Head of caudate nucleus (tissue), 42 donors: ENCODE measurements at regions of chr1 and their contacts with region 1.

Region 1: DNA sequence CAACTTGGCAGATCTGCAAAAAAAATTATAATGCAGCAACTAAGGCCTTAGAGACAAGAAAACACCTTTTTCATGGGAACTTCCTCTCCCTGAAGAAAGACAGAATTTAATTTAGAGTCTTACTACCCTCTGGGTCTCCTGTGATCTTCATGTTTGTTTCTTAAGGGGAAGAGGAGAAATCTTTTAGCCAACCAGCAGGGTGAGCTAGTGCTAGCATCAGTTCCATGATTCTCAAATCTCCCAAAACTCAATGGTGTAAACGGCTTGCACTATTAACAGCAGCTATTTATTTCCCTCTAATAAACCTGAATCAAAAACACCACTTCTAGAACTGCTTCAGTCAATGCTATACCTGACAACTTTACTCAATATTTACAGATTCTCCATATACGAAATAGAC is 3.8 kb downstream of the ZNF644 start:
- DNase-seq: peak in 4 of 42 donors; percentile 5 to 32 (median 16)

Region 2: DNA sequence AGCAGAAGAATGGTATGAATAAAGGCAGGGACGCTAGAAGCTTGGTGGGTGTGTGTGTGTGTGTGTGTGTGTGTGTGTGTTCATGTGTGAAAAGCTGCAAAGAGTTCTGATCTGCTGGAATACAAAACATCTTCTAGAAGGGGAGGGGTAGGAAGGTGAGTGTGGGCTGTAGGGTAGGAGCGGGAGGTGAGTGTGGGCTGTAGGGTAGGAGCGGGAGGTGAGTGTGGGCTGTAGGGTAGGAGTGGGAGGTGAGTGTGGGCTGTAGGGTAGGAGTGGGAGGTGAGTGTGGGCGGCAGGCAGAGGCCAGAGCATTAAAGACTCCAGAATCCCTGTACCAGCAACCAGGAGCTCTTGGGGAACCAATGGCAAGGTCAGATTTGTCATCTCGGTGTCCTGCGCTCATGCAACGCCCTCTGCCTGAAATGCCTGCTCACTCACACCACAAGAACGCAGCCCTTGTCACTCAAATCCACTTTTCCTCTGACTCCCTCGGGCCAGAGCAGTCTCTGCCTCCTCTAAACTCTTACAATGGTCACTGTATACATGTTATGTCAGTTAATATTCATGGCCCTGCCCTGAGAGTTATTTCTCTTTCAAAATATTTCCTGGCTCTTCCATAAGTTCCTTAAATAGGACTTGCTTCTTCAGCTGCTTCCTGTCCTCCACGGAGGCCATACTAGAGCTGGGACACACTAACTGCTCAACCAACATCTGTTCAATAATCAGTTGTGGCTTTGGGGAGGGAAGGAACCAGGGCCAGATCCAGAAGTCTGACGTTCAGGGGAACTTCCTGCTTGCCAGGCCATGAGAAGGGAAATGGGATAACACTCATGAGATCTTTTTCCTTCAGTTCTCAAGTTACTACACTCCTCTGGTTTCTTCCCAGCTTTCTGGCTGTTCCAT is 57.5 kb after region 1 on chr1:
- intact Hi-C with region 1: no loop called
- DNase-seq: no peak

Region 3: GRCh38 chr1:91124989-91125417 is 107.0 kb after region 1 on chr1:
- intact Hi-C with region 1: no loop called
- DNase-seq: peak in 5 of 42 donors; percentile 4 to 25 (median 9)

Region 4: GRCh38 chr1:91165033-91165654 is 147.1 kb after region 1 on chr1:
- intact Hi-C with region 1: loop called (anchors 5 kb)
- DNase-seq: peak; percentile 31 to 93 (median 84)